ENCODE measurements at regions of chr3 and their contacts with region 1.

Region 1: GRCh38 chr3:187679638-187680396 is 9.6 kb upstream of the SST start:
- DNase-seq: peak; percentile 81 to 88 (median 85)
- H3K4me3 ChIP-seq: no peak overlapping the region
- H3K27ac ChIP-seq: no peak overlapping the region
- H3K4me1 ChIP-seq: no peaks in the 10 kb centered on the region
- H3K27me3 ChIP-seq: no peaks in the 10 kb centered on the region
- CTCF ChIP-seq: peak; percentile 96

Region 2: DNA sequence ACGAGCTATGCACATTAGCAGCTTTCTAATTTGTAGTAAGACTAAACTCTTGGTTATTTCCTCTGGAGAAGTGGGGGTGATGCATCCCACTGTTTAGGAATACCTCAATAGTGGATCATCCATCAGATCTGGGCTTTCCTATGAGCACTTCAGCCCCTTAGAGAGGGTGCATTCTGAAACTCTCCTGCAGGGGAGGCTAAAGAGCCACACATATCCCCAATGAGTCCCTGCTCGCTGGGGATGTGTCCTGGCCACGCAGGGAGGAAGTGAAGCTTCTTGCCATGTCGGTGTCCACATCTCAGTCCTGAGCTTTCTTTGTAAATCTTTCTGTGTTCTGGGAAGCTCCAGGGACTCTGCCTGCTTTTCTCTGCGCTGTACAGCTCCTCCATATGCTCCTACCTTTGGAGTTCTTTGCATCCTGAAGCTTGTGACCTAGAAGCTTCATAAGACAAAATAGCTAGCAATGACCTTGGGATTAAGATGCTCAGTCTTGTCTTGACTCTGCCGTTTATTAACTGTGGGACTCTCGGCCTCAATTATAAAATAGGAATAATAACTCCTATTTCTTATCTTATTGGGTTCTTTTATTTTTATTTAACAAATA is 360.0 kb before region 1 on chr3:
- intact Hi-C with region 1: loop called (anchors 5 kb)
- DNase-seq: peak; percentile 78 to 90 (median 84)
- H3K4me3 ChIP-seq: no peak overlapping the region
- H3K27ac ChIP-seq: no peak overlapping the region
- H3K4me1 ChIP-seq: peaks cover 0 to 5% (median 5%) of the 10 kb centered on the region in 3 donors
- H3K27me3 ChIP-seq: no peaks in the 10 kb centered on the region
- CTCF ChIP-seq: peak; percentile 97

Region 3: GRCh38 chr3:188000361-188000861 is 320.6 kb after region 1 on chr3:
- intact Hi-C with region 1: no loop called
- DNase-seq: peak in 1 of 5 donors; percentile 46
- H3K4me3 ChIP-seq: no peak overlapping the region
- H3K27ac ChIP-seq: no peak overlapping the region
- H3K4me1 ChIP-seq: peaks cover 0 to 12% (median 3%) of the 10 kb centered on the region in 3 donors
- H3K27me3 ChIP-seq: no peaks in the 10 kb centered on the region
- CTCF ChIP-seq: no peak